AG04450 (cell line): ENCODE measurements at regions of chr9 and their contacts with region 1.

Region 1: DNA sequence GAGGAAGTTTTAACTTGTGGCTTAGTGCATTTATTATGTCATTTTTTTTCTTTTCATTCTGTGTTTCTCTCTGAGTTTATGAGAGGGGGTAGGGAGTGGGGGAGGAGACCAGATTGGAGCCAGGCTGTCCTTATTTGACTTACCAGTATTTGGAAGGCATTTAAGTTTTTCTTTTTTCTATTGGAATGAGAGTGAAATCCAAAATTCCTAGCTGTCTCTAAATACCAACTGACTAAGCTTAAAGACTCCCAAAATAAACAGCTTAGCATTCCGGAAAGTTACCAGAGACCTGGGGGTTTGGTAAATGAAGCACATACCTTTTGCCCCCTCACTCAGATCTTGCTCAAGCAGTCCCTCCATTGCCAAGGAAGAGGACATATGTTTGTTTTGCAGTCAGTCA is 581.9 kb upstream of the BRINP1 start:
- DNase-seq: no peak
- H3K4me3 ChIP-seq: no peak overlapping the region
- H3K27ac ChIP-seq: no peak overlapping the region
- H3K27me3 ChIP-seq: no peaks in the 10 kb centered on the region
- CTCF ChIP-seq: no peak

Region 2: DNA sequence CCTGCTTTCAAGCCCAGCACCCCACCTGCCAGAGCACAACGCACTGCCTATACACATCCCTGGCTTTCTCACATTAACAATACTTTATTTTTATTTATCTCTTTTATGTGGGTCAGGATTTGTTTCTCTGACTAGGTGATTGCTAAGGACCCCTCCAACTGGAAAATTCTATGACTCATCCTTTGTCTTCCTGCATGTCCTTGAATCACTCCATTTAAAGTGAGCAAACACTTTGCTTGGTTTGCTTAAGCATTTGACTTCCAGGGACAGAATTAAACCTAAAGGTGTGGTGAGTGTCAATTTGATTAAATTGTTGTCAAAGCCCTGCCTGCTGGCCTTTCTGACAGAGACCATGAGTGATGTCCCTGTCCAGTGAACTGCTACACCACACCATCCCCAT is 45.4 kb before region 1 on chr9:
- CTCF ChIA-PET with region 1: no interaction called
- POLR2A ChIA-PET with region 1: no interaction called
- DNase-seq: no peak
- H3K4me3 ChIP-seq: no peak overlapping the region
- H3K27ac ChIP-seq: no peak overlapping the region
- H3K27me3 ChIP-seq: no peaks in the 10 kb centered on the region
- CTCF ChIP-seq: no peak

Region 3: DNA sequence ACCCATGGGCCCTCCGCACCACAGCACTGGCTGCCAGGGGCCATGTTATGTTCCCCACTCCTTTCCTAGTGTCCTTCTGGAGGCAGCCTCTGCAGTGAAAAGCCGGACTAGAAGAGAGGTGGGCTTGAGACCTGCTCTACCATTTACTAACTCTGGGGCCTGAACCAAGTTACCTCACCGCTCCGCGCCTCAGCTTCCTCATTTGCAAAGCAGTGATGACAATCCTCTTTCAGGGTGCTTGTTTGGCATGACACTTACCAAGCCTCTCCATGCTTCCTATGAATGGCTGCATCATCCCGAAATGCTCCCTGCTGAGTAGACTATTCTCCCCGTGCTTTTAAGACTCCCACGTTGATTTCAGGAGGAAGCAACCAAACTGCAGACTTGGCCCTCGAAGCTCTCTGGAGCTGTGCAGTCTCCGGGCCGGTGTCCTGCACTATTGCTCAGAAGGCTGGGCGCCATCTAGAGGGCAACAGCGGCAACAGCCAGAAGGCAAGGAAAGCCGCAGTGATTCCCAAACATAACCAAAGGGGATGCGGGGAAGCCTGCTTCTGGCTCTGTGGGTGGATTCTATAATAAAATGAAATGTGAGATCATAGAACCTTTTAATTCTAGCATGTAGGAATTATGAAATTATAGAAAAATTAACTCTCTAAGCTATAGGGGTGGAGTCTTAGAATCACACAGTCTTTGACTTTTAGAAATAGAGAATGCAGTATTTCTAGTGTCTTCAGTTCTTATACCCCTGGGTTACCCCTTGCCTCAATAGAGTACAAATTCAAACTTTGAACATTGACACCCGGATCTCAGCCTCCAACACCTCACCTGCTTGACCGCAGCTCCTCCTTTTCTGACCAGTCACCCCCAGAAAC is 18.0 kb after region 1 on chr9:
- CTCF ChIA-PET with region 1: interaction called, 22 read pairs
- POLR2A ChIA-PET with region 1: no interaction called
- DNase-seq: no peak
- H3K4me3 ChIP-seq: no peak overlapping the region
- H3K27ac ChIP-seq: no peak overlapping the region
- H3K27me3 ChIP-seq: no peaks in the 10 kb centered on the region
- CTCF ChIP-seq: peak; percentile 99